ENCODE measurements at regions of chr4 and their contacts with region 1.

Region 1: DNA sequence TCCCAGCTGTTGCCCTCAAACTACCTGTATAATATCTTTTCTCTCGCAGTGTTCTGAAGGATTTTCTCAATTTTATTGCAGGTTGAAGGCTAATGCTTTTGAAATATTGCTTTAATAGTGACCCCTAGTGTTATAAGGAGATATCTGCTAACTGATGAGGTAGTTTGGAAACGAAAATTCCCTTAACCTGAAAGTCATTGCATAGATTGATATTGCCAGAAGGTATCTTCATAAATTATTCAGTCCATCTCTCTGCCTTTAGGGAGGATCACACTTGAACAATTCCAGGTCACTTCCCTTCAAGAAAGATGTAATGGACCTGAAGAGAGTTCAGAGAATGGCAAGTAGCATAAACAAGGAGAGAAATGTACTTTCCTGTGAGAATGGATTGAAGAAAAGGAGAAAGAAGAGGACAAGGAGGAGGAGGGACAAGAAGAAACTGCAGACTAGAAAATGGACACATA is 44.1 kb downstream of the TIGD4 start:
- DNase-seq: no peak
- ATAC-seq: no peak
- H3K4me3 ChIP-seq: no peak overlapping the region
- H3K27ac ChIP-seq: no peak overlapping the region
- H3K4me1 ChIP-seq: no peaks in the 10 kb centered on the region
- H3K27me3 ChIP-seq: no peaks in the 10 kb centered on the region

Region 2: GRCh38 chr4:152500800-152501434 is 234.5 kb before region 1 on chr4:
- intact Hi-C with region 1: loop called in 3 of 4 experiments (anchors 2 to 10 kb)
- DNase-seq: no peak
- ATAC-seq: peak in 1 of 2 donors; percentile 75
- H3K4me3 ChIP-seq: no peak overlapping the region
- H3K27ac ChIP-seq: no peak overlapping the region
- H3K4me1 ChIP-seq: no peaks in the 10 kb centered on the region
- H3K27me3 ChIP-seq: no peaks in the 10 kb centered on the region

Region 3: DNA sequence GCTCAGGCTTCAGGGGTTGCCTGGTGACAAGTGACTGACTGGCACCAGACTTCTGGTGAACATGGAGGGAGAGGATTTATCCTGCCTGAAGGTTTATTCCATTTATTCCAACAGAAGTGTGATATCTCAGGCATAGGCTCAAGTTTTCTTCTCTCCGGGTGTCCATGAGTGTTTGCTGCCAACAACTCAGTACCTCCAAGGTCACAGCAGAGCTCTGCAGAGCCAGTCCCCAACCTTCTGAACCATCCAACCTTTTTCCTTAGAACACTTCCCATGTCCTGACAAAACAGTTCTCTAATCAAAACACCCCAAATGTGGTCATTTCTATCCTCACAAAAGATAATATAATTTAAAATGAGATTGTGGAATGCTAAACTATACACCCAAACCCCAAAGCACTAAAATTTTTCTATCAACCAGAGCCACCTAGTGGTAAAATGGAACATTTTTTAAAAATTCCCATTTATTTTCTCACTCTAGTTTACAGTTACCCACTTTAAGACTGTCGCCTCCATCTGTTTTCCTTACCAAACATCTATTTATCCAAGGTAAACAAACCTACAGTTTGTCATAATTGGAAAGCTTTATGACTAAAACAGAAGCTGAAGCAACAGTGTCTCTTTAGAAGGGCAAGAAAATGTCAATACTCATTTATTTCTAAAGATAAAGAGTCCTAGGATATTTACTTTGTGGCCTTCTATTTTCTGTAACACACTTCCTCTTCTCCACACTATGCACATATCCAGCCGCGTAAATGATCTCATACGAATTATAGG is 95.2 kb before region 1 on chr4:
- intact Hi-C with region 1: loop called in 1 of 4 experiments (anchors 5 kb)
- DNase-seq: no peak
- ATAC-seq: peak; percentile 42 to 43
- H3K4me3 ChIP-seq: no peak overlapping the region
- H3K27ac ChIP-seq: no peak overlapping the region
- H3K4me1 ChIP-seq: no peaks in the 10 kb centered on the region
- H3K27me3 ChIP-seq: no peaks in the 10 kb centered on the region

Measured in right cardiac atrium (tissue), 5 donors.